Heart left ventricle (tissue), 16 donors: ENCODE measurements at regions of chr22 and their contacts with region 1.

Region 1: DNA sequence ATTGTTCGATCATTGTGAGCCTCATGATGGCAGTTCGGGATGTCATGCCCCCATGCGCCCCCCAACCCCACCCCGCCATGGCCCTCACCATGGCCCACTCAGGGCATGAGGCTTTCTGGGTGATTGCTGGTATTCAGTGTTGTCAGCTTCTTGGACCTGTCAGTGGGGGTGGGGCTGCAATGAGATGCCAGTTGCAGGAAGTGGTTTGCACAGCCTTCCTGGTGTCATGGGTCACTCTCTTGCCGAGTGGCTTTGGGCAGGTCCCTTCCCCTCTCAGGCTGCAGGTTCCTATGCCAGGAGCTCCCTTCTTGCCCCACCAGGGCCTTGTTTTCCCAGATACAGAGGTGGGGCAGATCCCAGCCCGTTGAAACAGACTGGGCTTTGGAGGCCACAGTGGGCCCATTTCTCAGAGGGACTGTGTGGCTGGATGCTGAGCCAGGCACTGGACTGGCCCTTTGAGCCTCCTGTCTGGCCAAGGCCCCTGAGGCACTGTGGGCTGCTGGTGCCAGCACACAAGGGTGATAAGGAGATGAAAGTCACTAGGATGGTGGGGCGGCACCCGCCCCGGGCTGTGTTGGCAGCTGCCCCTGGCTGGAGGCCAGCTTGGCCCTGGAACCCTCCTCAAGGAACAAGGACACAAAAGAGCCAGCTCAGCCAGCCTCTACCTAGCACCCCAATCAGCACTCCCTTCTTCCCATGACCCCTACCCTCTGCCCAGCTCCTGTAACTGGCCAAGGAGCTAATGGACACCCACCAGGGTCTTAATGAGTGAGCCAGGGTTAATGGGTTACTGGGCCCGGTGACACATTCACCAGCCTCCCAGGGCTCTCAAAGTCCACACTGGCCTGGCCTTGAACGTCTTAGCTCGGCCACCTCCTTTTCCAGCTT is 1.5 kb upstream of the GGT1 start:
- DNase-seq: peak; percentile 65 to 88 (median 85)
- ATAC-seq: peak; percentile 87 to 92 (median 88)
- H3K4me3 ChIP-seq: no peak overlapping the region
- H3K27ac ChIP-seq: no peak overlapping the region
- H3K4me1 ChIP-seq: peaks cover 0 to 22% (median 0%) of the 10 kb centered on the region in 12 donors
- H3K27me3 ChIP-seq: no peaks in the 10 kb centered on the region
- CTCF ChIP-seq: no peak
- POLR2A ChIP-seq: no peak

Region 2: GRCh38 chr22:23675492-23676415 is 925.7 kb before region 1 on chr22:
- intact Hi-C with region 1: loop called in 1 of 10 experiments (anchors 10 kb)
- DNase-seq: no peak
- ATAC-seq: peak in 3 of 4 donors; percentile 38 to 48 (median 46)
- H3K4me3 ChIP-seq: no peak overlapping the region
- H3K27ac ChIP-seq: no peak overlapping the region
- H3K4me1 ChIP-seq: peaks cover 0 to 10% (median 0%) of the 10 kb centered on the region in 12 donors
- H3K27me3 ChIP-seq: no peaks in the 10 kb centered on the region
- CTCF ChIP-seq: no peak
- POLR2A ChIP-seq: no peak